ENCODE measurements at regions of chr7 and their contacts with region 1.

Region 1: DNA sequence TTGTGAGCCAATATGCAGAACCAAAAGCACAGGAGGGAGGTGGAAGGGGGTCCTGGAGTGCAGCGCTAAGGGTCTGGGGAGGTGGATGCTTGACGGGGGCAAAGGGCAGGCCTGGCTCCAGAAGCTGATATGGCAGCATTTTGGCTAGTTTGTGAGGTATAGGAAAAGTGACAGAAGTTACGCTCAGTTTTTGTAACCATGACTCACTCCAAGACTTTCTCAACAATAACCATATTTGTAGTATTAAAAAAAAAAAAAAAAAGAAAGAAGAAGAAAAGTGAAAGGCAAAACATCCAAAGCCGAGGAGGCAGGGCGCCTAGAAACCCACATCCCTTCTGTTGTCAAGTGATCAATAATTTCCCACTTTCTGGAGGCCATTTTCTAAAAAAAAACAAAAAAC is 92.3 kb downstream of the RNF216 start:
- DNase-seq: no peak
- H3K4me3 ChIP-seq: no peak overlapping the region
- H3K27ac ChIP-seq: peak overlapping the region in 1 of 2 experiments; percentile 99; a peak in 2 of 4 replicates
- H3K4me1 ChIP-seq: peaks cover 43 to 54% of the 10 kb centered on the region in 2 experiments
- H3K27me3 ChIP-seq: no peaks in the 10 kb centered on the region
- CTCF ChIP-seq: no peak
- EP300 ChIP-seq: no peak
- RAD21 ChIP-seq: no peak

Region 2: DNA sequence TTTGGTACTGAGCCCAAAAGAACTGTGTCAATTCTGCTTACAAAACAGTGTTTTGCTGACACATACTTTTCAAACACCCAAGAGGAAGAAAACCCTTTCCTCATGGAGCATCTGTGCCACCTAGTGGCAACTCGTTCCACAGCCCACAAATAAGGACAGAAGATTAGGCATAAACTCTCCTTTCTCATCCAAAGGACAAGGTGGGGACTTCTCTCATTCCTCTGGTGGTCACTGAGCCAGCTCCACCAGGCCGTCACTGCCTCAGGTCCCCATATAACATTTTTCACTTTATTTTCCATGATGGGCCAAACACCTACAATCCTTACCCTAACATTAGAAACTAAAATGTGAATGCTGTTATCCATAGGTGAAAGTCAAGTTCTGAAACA is 15.4 kb after region 1 on chr7:
- CTCF ChIA-PET with region 1: interaction called, 102 read pairs
- POLR2A ChIA-PET with region 1: interaction called, 7 read pairs
- DNase-seq: peak; percentile 75
- H3K4me3 ChIP-seq: no peak overlapping the region
- H3K27ac ChIP-seq: peak overlapping the region; percentile 6 to 7; a peak in 3 of 4 replicates
- H3K4me1 ChIP-seq: peaks cover 9 to 13% of the 10 kb centered on the region in 2 experiments; a peak in 3 of 4 replicates
- H3K27me3 ChIP-seq: no peaks in the 10 kb centered on the region
- CTCF ChIP-seq: peak; percentile 99
- EP300 ChIP-seq: no peak
- RAD21 ChIP-seq: peak; percentile 98

Region 3: GRCh38 chr7:5750026-5750653 is 61.0 kb after region 1 on chr7:
- CTCF ChIA-PET with region 1: no interaction called
- POLR2A ChIA-PET with region 1: no interaction called
- DNase-seq: no peak
- H3K4me3 ChIP-seq: no peak overlapping the region
- H3K27ac ChIP-seq: peak overlapping the region in 1 of 2 experiments; percentile 7; a peak in 1 of 4 replicates
- H3K4me1 ChIP-seq: peaks cover 0 to 2% of the 10 kb centered on the region in 2 experiments; a peak in 2 of 4 replicates
- H3K27me3 ChIP-seq: no peaks in the 10 kb centered on the region
- CTCF ChIP-seq: no peak
- EP300 ChIP-seq: no peak
- RAD21 ChIP-seq: no peak